ENCODE measurements at regions of chrX and their contacts with region 1.

Region 1: DNA sequence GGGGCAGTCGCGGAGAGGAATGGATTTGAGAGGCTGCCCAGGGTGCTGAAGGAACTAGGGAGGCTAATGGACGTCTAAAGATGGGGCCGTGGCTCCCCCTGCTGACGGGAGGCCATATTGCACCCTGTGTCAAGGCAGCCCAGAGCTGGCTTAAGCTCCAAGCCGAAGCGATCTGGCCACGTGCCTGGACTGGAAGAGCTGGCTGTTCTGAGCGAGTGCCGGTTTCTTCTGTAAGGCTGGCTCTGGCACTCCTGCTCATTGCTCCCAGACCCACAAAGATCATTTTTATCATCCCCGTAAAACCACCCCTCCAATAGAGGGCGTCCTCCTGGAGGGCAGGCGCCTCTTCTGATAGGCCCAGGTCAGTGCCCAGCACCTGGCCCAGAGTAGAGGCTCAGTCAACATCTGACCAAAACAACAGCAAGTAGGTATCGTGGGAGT is 5.6 kb downstream of the PNCK start:
- DNase-seq: peak; percentile 86 to 96 (median 95)
- ATAC-seq: peak; percentile 83
- H3K4me3 ChIP-seq: no peak overlapping the region
- H3K27ac ChIP-seq: no peak overlapping the region
- H3K4me1 ChIP-seq: no peaks in the 10 kb centered on the region
- H3K27me3 ChIP-seq: no peaks in the 10 kb centered on the region

Region 2: DNA sequence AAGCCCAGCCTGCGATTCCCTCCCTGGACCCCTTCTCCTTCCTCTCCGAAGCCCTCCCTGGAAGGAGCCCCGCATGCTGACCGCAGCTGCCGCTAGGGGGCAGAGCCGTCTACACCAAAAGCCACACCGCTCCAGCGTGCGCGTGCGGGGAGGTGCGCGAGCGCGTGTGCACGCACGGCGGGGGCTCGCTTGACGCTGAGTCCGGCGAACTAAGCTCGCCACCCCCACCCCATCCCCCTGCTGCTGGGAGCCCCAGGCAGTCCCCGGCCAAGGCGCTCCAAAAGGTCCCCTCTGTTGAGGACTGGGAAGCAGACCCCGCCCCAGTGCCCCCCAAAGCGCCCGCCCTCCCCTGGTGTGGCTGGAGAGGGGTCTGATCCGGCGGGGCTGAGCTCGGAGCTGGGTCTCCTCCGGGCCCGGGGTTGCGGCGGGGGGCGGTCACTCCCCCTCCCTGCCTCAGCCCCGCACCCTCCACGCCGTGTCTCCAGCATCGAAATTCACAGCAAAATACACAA is 58.0 kb before region 1 on chrX:
- intact Hi-C with region 1: loop called in 1 of 4 experiments (anchors 10 kb)
- DNase-seq: peak; percentile 77 to 93 (median 92)
- ATAC-seq: peak; percentile 95 to 96
- H3K4me3 ChIP-seq: peak overlapping the region; percentile 35
- H3K27ac ChIP-seq: no peak overlapping the region
- H3K4me1 ChIP-seq: no peaks in the 10 kb centered on the region
- H3K27me3 ChIP-seq: no peaks in the 10 kb centered on the region